ENCODE measurements at regions of chr6 and their contacts with region 1.

Region 1: DNA sequence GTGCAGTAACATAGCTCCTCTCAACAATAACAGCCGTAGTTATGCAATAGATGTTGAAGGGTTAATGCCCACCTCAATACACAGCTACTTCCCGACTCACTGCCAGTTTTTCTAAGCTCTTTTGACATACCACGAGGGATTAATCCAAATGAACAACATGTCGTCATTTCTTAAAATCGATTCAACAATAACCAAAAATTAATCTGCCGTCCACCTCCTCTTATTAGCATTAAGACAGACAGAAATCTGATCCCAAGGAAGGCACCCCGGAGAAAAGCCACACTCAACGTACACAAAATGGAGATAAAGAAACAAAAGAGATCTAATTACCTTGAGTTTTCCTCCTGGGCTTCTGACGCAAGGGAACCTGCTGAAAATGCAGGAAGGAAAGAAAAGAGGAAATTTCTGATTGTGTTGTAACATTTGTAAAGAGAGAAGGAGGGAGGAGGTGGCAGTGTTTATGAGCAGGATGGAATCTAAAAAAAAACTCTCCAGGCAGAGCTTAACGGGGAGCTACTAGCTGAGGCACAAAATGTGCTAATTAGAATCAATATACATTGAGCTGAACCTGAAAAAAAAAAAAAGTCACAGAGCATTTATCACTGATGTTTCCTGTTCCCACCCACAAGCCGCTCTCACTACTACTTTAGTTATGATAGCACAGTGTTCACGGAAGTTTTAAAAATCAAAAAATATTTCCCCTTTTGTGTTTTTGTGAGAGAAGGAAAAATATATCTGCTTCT is 109.3 kb downstream of the IPCEF1 start:
- DNase-seq: peak; percentile 69
- H3K4me3 Mint-ChIP-seq: peak overlapping the region; percentile 87
- H3K27ac Mint-ChIP-seq: peak overlapping the region; percentile 98
- H3K4me1 Mint-ChIP-seq: peaks cover 68% of the 10 kb centered on the region
- H3K27me3 Mint-ChIP-seq: no peaks in the 10 kb centered on the region

Region 2: DNA sequence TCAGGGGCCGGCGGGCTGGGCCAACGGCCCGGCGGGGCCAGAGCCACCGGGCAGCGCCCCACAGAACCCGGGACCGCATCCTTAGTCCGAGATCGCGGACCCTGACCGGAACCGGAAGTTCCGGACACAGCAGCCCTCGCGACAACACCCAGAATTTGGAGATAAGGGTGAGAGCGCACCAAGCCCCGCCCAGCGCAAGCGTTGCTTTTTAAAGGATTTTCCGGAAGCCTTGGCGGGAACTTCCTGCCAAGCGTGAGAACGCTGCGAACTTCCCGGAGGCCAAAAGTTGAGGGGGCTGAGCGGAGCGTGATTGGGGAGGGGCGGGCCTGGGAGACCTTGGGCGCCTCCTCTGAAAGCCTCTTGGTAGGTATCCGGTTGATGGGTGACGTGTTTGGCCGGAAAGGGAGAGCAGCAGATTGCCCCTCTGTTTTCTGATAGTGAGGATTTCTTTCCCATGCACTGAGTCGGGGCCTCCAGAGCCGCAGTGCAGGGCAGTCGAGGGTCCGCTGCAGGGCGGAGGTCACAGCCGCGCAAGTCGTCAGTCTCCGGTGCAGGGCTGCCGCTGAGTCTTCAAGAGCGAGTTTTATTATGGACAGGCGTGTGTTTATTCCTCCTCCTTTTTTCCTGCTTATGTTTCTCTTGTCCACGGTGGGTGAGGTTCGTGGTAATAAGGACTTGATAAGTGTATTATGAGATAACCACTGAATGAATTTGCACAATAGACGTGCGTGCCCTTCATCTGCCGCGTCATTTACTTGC is 1244.5 kb before region 1 on chr6 and contains the start of gene MTRF1L:
- CTCF ChIA-PET with region 1: no interaction called
- intact Hi-C with region 1: loop called (anchors 5 kb)
- DNase-seq: peak; percentile 95
- H3K4me3 Mint-ChIP-seq: peak within 1 kb of the TSS; percentile 98
- H3K27ac Mint-ChIP-seq: peak within 1 kb of the TSS; percentile 94
- H3K4me1 Mint-ChIP-seq: peaks cover 33% of the 10 kb centered on the region
- H3K27me3 Mint-ChIP-seq: no peaks in the 10 kb centered on the region
- total RNA-seq, gene MTRF1L: 11.6 to 12.0 TPM

Region 3: GRCh38 chr6:154218301-154218700 is 29.0 kb before region 1 on chr6:
- CTCF ChIA-PET with region 1: interaction called, 6 read pairs
- intact Hi-C with region 1: loop called (anchors 1 kb)
- DNase-seq: peak; percentile 74
- H3K4me3 Mint-ChIP-seq: peak overlapping the region; percentile 65
- H3K27ac Mint-ChIP-seq: peak overlapping the region; percentile 83
- H3K4me1 Mint-ChIP-seq: peaks cover 66% of the 10 kb centered on the region
- H3K27me3 Mint-ChIP-seq: no peaks in the 10 kb centered on the region

Region 4: DNA sequence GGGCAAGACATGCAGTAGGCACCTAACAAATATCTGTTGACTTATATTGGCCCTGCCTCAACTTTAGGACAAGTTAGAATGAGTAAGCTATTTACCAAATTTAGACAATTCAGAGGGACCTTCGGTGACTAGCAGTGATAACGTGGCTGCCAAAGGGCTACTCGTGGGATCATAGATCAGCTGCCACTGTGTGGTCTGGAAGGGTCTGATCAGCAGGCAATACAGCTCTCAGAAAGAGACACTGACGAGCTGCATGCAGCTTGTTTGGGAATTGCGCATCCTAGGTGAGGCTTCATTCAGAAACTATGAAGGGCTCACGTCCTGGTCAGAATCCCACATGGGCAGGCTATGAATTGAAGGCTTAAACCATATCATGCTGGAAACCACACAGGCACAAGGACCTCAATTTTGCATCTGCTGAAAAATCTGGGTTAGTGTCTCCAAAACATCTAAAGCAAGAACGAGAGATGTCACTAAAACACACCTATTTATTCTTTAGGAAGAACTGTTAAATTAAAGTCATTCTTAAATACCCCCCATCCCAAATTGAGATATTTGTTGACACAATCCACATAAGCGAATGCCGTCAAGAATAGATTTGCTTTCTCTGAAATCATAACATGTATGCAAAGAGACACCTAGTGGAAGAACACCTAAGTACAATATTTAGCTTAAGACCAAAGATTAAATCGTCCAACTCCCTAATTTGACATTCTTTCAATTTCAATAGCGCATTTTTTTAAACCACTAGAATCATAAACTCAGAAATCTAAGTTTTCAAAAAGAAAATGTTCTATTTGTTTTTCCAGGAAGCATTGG is 29.7 kb after region 1 on chr6:
- CTCF ChIA-PET with region 1: interaction called, 16 read pairs
- intact Hi-C with region 1: loop called (anchors 1 kb)
- DNase-seq: no peak
- H3K4me3 Mint-ChIP-seq: peak overlapping the region; percentile 65
- H3K27ac Mint-ChIP-seq: no peak overlapping the region
- H3K4me1 Mint-ChIP-seq: peaks cover 34% of the 10 kb centered on the region
- H3K27me3 Mint-ChIP-seq: no peaks in the 10 kb centered on the region

Region 5: DNA sequence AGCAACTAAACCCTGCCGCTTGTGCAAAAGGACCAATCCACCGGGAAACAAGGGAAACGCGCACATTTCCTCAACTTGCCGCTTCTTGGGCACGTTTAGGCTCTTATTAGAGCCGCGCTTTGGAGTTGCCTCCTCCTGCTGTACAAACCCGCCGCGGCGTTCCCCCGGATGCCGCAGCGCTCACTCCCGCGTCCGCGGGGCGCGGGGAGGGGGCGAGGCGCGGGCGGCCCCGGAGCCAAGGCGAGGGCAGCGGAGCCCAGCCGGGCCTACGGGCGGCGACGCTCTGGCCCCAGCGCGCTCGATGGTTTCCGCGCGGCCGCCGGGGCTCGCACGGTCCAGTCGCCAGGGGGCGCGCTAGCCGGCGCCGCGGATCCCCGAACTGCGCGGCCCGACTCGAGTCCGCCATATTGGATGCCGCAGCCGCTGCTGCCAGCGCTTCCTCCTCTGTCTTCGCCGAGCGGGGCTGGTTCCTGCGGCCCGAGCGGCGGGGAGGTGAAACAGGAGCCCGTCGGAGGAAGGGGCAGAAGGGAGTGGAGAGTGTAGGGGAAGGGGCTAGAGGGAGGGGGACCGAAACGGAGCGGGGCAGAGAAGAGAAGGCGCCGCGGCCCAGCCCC is 485.8 kb after region 1 on chr6 and contains the start of gene SCAF8:
- CTCF ChIA-PET with region 1: no interaction called
- intact Hi-C with region 1: loop called (anchors 5 kb)
- DNase-seq: peak; percentile 83
- H3K4me3 Mint-ChIP-seq: peak within 1 kb of the TSS; percentile 85
- H3K27ac Mint-ChIP-seq: peak within 1 kb of the TSS; percentile 93
- H3K4me1 Mint-ChIP-seq: peaks cover 44% of the 10 kb centered on the region
- H3K27me3 Mint-ChIP-seq: no peaks in the 10 kb centered on the region
- total RNA-seq, gene SCAF8: 27.2 to 28.0 TPM